Posterior cingulate gyrus (tissue), 11 donors: ENCODE measurements at regions of chr5 and their contacts with region 1.

Region 1: GRCh38 chr5:59810041-59810440 is 83.5 kb downstream of the PDE4D start:
- DNase-seq: peak; percentile 69 to 97 (median 80)

Region 2: GRCh38 chr5:60287174-60287771 is 477.2 kb after region 1 on chr5:
- intact Hi-C with region 1: loop called (anchors 5 kb)
- DNase-seq: peak in 3 of 10 donors; percentile 17 to 86 (median 24)

Region 3: GRCh38 chr5:60382716-60383115 is 572.7 kb after region 1 on chr5:
- intact Hi-C with region 1: loop called (anchors 2 kb)
- DNase-seq: no peak

Region 4: GRCh38 chr5:60586307-60586901 is 776.4 kb after region 1 on chr5:
- intact Hi-C with region 1: loop called (anchors 2 kb)
- DNase-seq: no peak

Region 5: GRCh38 chr5:60649283-60649917 is 839.4 kb after region 1 on chr5:
- intact Hi-C with region 1: loop called (anchors 5 kb)
- DNase-seq: no peak

Region 6: DNA sequence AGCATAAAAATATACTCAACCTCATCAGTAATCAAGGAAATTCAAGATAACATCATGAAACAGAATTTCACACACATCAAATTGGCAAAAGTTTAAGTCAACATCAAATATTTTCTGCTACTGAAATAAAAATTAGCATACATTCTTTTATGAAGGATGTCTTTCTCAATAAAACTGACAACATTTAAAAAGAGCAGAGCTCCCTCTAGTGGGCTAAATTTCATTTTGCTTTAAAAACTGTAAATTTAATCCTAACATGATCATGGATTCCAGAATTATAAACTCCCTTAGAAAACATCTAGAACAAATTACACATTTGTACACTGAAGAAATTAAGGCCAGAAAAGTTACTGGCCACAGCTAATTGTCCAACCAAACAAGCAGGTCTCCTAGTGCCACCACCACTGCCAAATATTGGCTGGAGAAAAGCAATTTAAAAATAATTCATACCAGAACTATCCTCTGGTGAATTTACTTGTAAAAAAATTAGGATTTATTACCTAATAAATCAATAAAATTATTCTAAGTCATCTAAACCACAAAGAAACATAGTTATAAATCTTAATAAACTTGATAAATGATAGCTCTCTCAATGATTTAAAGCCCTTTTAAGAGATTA is 858.8 kb after region 1 on chr5:
- intact Hi-C with region 1: loop called (anchors 2 kb)
- DNase-seq: no peak